Activated naive CD4-positive, alpha-beta T cell treated with anti-CD3 and anti-CD28 coated beads for 36 hours (primary cell): ENCODE measurements at regions of chr4 and their contacts with region 1.

Region 1: GRCh38 chr4:39458505-39459300 is at the starts of genes LIAS and RPL9:
- DNase-seq: peak; percentile 95
- H3K4me3 Mint-ChIP-seq: peak within 1 kb of the TSS; percentile 91
- H3K27ac Mint-ChIP-seq: peak within 1 kb of the TSS; percentile 98
- H3K4me1 Mint-ChIP-seq: peaks cover 48% of the 10 kb centered on the region
- H3K27me3 Mint-ChIP-seq: no peaks in the 10 kb centered on the region
- total RNA-seq, gene LIAS: 30.9 to 31.7 TPM
- total RNA-seq, gene RPL9: 2,383 to 2,428 TPM

Region 2: DNA sequence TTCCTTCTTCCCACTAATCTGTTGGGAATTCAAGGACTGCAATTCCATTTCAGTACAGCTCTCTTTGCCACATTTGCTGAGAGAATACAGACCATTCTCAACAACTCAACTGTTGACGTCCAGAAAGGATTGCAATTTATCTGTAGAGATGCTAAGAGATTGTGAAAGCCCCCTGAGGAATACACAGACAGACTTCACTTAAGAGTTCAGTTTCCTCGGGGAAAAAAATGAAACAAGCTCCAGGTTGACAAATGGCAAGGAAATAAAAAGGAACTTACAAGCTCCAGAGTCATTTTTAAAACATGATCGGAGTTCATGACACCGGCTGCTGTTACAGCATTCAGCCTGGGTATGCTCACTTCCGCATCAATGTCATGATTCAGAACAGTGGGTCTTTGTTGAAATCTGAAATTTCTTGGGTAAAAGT is 689.7 kb before region 1 on chr4:
- CTCF ChIA-PET with region 1: no interaction called
- intact Hi-C with region 1: loop called (anchors 10 kb)
- DNase-seq: no peak
- H3K4me3 Mint-ChIP-seq: no peak overlapping the region
- H3K27ac Mint-ChIP-seq: no peak overlapping the region
- H3K4me1 Mint-ChIP-seq: no peaks in the 10 kb centered on the region
- H3K27me3 Mint-ChIP-seq: no peaks in the 10 kb centered on the region

Region 3: DNA sequence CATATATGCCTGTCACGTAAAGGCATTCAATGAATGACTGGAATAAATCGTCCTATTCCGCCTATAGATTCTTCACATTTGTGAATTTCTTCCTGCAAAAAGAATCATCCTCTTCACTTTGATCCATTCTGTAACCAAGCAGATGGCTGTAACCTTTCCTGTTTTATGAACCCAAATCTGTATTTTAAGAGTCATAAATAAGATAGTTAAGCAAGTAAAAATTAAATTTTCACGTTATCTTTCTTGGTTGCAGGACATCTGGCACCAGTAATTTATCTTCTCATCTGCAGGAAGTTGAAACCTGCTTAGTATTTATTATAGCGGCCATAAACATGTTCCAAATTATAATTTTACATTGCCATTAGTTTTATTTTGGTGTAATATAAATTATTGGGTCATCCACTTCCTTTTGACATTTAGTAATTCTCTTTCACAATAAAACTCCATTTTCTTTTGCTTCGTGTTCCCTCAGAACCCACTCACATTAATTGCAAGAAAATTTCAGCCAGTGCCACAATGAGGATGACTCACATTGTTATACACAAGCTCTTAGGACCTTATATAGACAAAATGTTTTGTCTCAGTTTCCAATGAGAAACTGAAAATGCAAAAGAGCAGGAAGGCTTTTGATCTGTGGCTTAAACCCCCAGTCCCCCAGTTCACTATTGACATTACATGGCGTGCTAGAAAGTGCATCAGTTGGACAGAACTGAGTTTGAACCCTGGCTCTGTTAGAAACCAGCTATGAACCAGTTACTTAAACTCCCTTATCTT is 477.6 kb before region 1 on chr4:
- CTCF ChIA-PET with region 1: no interaction called
- intact Hi-C with region 1: no loop called
- DNase-seq: peak; percentile 51
- H3K4me3 Mint-ChIP-seq: no peak overlapping the region
- H3K27ac Mint-ChIP-seq: peak overlapping the region; percentile 87
- H3K4me1 Mint-ChIP-seq: peaks cover 62% of the 10 kb centered on the region
- H3K27me3 Mint-ChIP-seq: no peaks in the 10 kb centered on the region

Region 4: GRCh38 chr4:39365830-39366771 is 92.6 kb before region 1 on chr4 and contains the start of gene RFC1:
- CTCF ChIA-PET with region 1: interaction called, 3 read pairs
- intact Hi-C with region 1: loop called (anchors 1 kb)
- DNase-seq: peak; percentile 97
- H3K4me3 Mint-ChIP-seq: peak within 1 kb of the TSS; percentile 93
- H3K27ac Mint-ChIP-seq: peak within 1 kb of the TSS; percentile 91
- H3K4me1 Mint-ChIP-seq: peaks cover 32% of the 10 kb centered on the region
- H3K27me3 Mint-ChIP-seq: no peaks in the 10 kb centered on the region
- total RNA-seq, gene RFC1: 109 to 123 TPM

Region 5: GRCh38 chr4:39469429-39470077 is 10.8 kb after region 1 on chr4:
- CTCF ChIA-PET with region 1: interaction called, 27 read pairs
- intact Hi-C with region 1: no loop called
- DNase-seq: peak; percentile 24
- H3K4me3 Mint-ChIP-seq: no peak overlapping the region
- H3K27ac Mint-ChIP-seq: peak overlapping the region; percentile 37
- H3K4me1 Mint-ChIP-seq: peaks cover 12% of the 10 kb centered on the region
- H3K27me3 Mint-ChIP-seq: no peaks in the 10 kb centered on the region

Region 6: GRCh38 chr4:39533541-39533940 is 74.8 kb after region 1 on chr4:
- CTCF ChIA-PET with region 1: no interaction called
- intact Hi-C with region 1: no loop called
- DNase-seq: no peak
- H3K4me3 Mint-ChIP-seq: no peak overlapping the region
- H3K27ac Mint-ChIP-seq: no peak overlapping the region
- H3K4me1 Mint-ChIP-seq: peaks cover under 1% of the 10 kb centered on the region
- H3K27me3 Mint-ChIP-seq: no peaks in the 10 kb centered on the region

Region 7: DNA sequence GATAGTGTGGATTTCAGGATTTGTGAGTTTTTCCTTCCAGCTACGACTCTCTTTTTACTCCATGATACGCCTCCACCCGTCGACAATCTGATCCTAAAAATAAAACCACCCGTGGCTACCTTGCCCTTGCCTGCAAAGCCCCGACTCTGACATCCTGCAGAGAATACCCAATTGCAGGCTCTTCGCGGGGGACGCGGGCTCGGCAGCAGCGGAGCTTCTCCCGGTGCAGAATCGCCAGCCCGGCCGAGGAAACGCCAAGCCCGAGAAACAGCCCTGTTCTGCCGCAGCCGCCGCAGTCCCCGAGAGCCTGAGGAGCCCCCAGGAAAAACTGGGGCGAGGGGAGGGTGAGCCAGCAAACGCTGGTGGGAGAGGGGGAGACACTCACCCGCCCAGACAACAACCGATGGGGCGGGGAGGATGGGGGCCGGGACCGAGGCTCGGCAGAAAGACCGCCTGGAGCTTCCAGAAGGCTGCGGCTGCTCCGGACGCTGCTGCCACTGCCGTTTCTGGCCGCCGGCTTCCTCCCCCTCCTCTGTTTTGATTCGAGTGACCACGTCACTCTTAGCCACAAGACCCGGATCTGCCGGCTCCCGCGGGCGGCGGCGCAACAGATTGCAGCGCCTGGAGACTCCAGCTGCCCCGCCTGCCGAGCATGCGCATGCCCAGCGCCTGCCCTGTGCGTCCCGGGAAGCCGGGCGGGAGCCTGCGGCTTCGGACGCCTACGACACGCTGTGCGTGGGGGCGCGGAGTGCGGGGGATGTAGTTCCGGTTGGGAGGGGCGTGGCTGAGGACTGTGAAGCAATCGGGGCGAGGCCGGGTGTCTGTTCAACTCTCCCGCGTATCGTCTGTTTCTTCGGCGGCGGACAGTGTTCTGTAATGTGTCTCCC is 179.9 kb after region 1 on chr4 and contains the start of gene SMIM14:
- CTCF ChIA-PET with region 1: interaction called, 5 read pairs
- intact Hi-C with region 1: loop called (anchors 1 kb)
- DNase-seq: peak; percentile 93
- H3K4me3 Mint-ChIP-seq: peak within 1 kb of the TSS; percentile 85
- H3K27ac Mint-ChIP-seq: peak within 1 kb of the TSS; percentile 69
- H3K4me1 Mint-ChIP-seq: peaks cover 24% of the 10 kb centered on the region
- H3K27me3 Mint-ChIP-seq: no peaks in the 10 kb centered on the region
- total RNA-seq, gene SMIM14: 2.7 to 3.9 TPM

Region 8: GRCh38 chr4:39682138-39682537 is 223.4 kb after region 1 on chr4:
- CTCF ChIA-PET with region 1: no interaction called
- intact Hi-C with region 1: no loop called
- DNase-seq: no peak
- H3K4me3 Mint-ChIP-seq: no peak overlapping the region
- H3K27ac Mint-ChIP-seq: no peak overlapping the region
- H3K4me1 Mint-ChIP-seq: no peaks in the 10 kb centered on the region
- H3K27me3 Mint-ChIP-seq: no peaks in the 10 kb centered on the region